ENCODE measurements at regions of chr9 and their contacts with region 1.

Region 1: GRCh38 chr9:130701056-130702022 is 7.8 kb downstream of the EXOSC2 start:
- DNase-seq: peak in 1 of 2 donors; percentile 45
- ATAC-seq: peak; percentile 53 to 90
- H3K4me3 ChIP-seq: no peak overlapping the region
- H3K27ac ChIP-seq: no peak overlapping the region
- H3K4me1 ChIP-seq: no peaks in the 10 kb centered on the region
- H3K27me3 ChIP-seq: no peaks in the 10 kb centered on the region
- CTCF ChIP-seq: peak; percentile 61 to 92 (median 80)
- POLR2A ChIP-seq: no peak

Region 2: GRCh38 chr9:130607640-130608420 is 93.5 kb before region 1 on chr9:
- in situ Hi-C with region 1: no loop called
- intact Hi-C with region 1: no loop called
- DNase-seq: no peak
- ATAC-seq: no peak
- H3K4me3 ChIP-seq: no peak overlapping the region
- H3K27ac ChIP-seq: no peak overlapping the region
- H3K4me1 ChIP-seq: peaks cover 0 to 8% of the 10 kb centered on the region in 2 donors
- H3K27me3 ChIP-seq: no peaks in the 10 kb centered on the region
- CTCF ChIP-seq: no peak
- POLR2A ChIP-seq: no peak

Region 3: GRCh38 chr9:130718562-130718961 is 17.2 kb after region 1 on chr9:
- in situ Hi-C with region 1: no loop called
- intact Hi-C with region 1: no loop called
- DNase-seq: no peak
- ATAC-seq: no peak
- H3K4me3 ChIP-seq: no peak overlapping the region
- H3K27ac ChIP-seq: no peak overlapping the region
- H3K4me1 ChIP-seq: peaks cover 21 to 26% of the 10 kb centered on the region in 2 donors
- H3K27me3 ChIP-seq: no peaks in the 10 kb centered on the region
- CTCF ChIP-seq: no peak
- POLR2A ChIP-seq: no peak

Region 4: DNA sequence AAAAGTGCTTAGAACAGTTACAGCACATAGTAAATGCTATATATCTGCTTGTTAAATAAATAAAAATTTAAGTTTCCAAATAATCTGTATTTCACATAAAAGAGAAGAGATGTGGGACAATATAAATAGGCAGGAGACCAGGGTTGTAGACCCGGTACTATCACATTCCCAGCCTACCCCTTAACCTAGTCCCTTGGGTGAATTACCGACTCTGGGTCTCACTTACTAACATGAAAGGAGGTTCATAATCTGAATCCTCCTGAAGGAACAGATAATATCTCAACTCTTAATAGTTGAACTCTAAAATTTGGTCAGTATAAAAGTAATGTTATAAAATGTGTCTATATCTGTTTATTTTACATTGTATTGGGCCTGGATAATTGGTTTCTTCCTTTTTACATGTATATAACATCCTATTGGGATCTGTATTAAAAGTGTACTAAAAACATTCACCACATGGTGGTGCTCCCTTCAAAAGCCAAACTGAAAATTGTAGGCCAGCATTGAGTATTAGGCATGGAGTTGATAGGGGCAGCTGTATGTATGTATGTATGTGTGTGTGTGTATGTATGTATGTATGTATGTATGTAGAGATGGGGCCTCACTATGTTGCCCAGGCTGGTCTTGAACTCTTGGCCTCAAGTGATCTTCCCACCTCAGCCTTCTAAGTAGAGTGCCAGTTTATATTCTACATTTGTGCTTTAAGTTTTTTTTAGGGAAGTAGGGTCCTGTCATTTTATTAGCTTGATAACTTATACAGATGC is 69.5 kb after region 1 on chr9:
- in situ Hi-C with region 1: loop called in 1 of 4 experiments (anchors 10 kb)
- intact Hi-C with region 1: no loop called
- DNase-seq: no peak
- ATAC-seq: peak; percentile 74 to 77
- H3K4me3 ChIP-seq: no peak overlapping the region
- H3K27ac ChIP-seq: no peak overlapping the region
- H3K4me1 ChIP-seq: peaks cover 10 to 15% of the 10 kb centered on the region in 2 donors
- H3K27me3 ChIP-seq: no peaks in the 10 kb centered on the region
- CTCF ChIP-seq: peak; percentile 58 to 67 (median 60)
- POLR2A ChIP-seq: no peak

Region 5: GRCh38 chr9:130866474-130866965 is 165.2 kb after region 1 on chr9:
- in situ Hi-C with region 1: loop called (anchors 5 to 10 kb)
- intact Hi-C with region 1: loop called (anchors 2 kb)
- DNase-seq: peak; percentile 32 to 64
- ATAC-seq: peak; percentile 70 to 86
- H3K4me3 ChIP-seq: no peak overlapping the region
- H3K27ac ChIP-seq: no peak overlapping the region
- H3K4me1 ChIP-seq: peaks cover 2 to 13% of the 10 kb centered on the region in 2 donors
- H3K27me3 ChIP-seq: no peaks in the 10 kb centered on the region
- CTCF ChIP-seq: peak; percentile 55 to 78 (median 64)
- POLR2A ChIP-seq: no peak

Region 6: DNA sequence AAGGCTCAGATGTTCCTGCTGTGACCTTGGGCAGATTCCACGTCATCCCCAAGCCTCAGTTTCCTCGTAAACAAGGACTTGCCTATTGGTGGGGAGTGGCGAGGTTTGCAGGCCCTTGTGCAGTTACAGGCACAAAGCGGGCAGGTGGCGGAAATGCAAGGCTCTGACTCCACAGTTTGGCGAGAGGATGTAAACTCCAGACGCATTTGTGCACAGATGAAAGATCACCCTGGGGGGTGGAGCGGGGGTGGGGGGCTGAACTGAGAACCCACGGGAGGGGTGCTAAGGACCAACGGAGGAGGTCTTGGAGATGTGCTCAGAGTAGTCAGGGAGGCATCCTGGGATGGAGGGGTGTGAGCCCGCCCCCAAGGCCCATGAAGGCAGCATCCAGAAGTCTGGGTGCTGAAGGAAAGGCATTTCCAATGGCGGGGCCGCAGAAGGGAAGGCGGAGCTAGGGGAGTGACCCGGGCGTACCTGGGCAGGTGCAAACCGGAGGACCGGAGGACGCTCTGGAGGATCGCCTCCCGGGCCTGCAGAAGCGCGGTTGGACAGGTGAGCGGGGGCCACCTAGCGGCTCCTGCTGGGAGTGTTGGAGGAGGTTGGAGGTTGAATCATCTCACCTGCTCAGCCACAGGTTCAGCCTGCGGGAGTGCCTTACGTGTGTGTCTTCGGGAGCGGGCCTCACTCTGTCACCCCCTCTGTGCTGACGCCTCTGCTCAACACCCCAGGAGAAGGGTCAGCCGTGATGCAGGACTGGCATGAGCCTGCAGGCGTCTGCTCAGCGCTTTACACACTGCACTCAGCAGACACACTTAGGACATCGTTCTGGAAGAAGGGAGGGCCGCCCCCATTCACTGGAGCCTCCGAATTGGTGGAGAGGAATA is 239.6 kb after region 1 on chr9:
- in situ Hi-C with region 1: loop called in 3 of 4 experiments (anchors 5 to 10 kb)
- intact Hi-C with region 1: no loop called
- DNase-seq: peak; percentile 28 to 37
- ATAC-seq: peak; percentile 65 to 79
- H3K4me3 ChIP-seq: no peak overlapping the region
- H3K27ac ChIP-seq: no peak overlapping the region
- H3K4me1 ChIP-seq: peaks cover 0 to 7% of the 10 kb centered on the region in 2 donors
- H3K27me3 ChIP-seq: peaks cover 48 to 70% (median 67%) of the 10 kb centered on the region in 3 donors
- CTCF ChIP-seq: peak; percentile 59 to 85 (median 80)
- POLR2A ChIP-seq: no peak

Region 7: DNA sequence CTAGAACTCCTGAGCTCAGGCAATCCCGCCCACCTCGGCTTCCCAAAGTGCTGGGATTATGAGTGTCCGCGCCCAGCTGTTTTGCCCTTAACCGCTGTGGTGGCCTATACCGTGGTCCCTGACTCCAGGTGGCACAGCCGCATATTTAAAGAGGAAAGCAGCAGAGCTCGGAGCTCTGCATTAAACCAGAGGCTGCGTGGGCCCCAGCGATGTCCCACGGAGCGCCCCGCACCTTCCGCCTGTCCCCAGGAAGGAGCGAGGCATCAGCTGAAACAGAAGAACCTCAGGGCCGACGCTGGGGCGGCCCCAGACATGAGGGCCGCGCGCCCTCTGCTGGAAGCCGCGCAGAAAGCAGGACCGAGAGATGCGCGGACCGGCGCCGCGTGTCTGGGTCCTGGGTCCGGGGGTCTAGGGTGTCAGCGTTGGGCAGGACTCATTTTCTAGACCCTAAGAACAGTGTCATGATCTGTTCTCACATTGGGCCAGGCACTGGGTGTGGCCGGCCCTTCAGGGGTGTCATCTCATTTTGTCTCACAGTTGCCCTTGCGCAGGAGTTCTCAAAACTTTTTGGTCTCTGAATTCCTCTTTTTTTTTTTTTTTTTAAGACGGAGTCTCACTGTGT is 345.4 kb after region 1 on chr9:
- in situ Hi-C with region 1: no loop called
- intact Hi-C with region 1: loop called (anchors 2 kb)
- DNase-seq: no peak
- ATAC-seq: peak; percentile 69
- H3K4me3 ChIP-seq: no peak overlapping the region
- H3K27ac ChIP-seq: no peak overlapping the region
- H3K4me1 ChIP-seq: no peaks in the 10 kb centered on the region
- H3K27me3 ChIP-seq: no peaks in the 10 kb centered on the region
- CTCF ChIP-seq: peak; percentile 59 to 90 (median 79)
- POLR2A ChIP-seq: no peak